Panc1 (cell line): ENCODE measurements at regions of chr17 and their contacts with region 1.

Region 1: DNA sequence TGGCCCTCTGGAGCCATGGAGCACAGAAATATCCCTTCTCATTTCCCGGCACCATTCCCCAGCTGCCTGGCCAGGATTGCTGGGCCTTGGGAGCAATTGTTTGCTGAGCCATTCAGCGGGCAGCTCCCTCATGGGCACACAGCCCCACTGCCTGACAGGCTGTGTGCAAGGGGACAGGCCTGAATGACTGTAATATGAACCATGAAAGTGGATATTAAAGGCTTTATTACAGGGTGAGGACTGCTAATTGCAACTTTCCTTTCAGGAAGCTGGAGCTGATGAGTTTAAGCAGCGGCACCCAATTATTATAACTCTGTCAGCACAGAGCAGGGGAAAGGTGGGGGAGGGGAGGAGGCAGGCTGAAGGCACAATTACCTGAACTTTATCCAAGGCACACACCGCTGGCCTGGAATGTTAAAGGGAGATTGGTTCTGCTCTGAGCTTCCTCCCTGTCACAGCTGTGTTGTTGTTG is 159.8 kb upstream of the SDK2 start:
- DNase-seq: no peak
- ATAC-seq: no peak
- H3K4me3 ChIP-seq: no peak overlapping the region
- H3K27ac ChIP-seq: no peak overlapping the region
- H3K4me1 ChIP-seq: no peaks in the 10 kb centered on the region
- H3K27me3 ChIP-seq: peaks cover 11% of the 10 kb centered on the region
- CTCF ChIP-seq: no peak

Region 2: DNA sequence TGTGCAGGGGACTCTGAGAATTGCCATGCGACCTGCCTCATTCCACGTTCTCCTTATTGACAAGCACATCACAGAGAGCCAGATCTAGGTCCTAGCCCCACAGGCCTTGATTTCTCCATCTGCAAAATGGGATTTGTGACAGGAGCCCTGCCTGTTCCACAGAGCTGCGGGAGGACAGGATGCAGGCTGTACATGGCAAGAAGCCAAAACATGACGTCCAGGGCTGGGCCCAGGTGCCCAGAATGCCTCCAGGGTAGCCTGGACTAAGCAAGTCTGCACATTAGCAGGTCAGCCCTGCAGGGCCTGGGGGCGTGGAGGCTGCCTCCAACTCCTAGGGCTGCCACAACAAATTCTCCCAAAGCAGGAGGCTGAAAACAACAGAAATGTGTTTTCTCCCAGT is 76.0 kb after region 1 on chr17:
- CTCF ChIA-PET with region 1: no interaction called
- POLR2A ChIA-PET with region 1: no interaction called
- in situ Hi-C with region 1: no loop called
- intact Hi-C with region 1: no loop called
- DNase-seq: no peak
- ATAC-seq: no peak
- H3K4me3 ChIP-seq: no peak overlapping the region
- H3K27ac ChIP-seq: no peak overlapping the region
- H3K4me1 ChIP-seq: no peaks in the 10 kb centered on the region
- H3K27me3 ChIP-seq: peaks cover 14% of the 10 kb centered on the region; the same call in 1 of the 2 replicates
- CTCF ChIP-seq: no peak

Region 3: DNA sequence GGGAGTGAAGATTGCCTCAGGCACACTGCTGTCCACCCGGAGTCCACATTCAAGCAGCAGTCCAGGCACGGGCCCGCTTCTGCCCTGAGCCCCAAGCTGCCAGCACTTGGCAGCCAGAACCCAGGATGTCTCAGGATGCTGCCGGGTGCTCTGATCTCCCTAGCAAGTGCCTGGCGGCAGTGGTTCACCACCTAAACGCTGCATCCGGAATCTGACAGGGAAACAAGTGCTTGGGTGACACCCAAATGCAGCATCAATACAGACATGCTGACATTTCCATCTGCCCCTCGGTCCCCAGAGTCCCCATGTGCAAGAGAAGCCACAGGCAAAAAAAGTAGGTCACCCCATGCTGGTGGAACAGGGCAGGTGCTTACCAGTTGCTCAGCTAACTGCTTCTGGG is 202.4 kb after region 1 on chr17:
- CTCF ChIA-PET with region 1: interaction called, 12 read pairs
- POLR2A ChIA-PET with region 1: no interaction called
- in situ Hi-C with region 1: no loop called
- intact Hi-C with region 1: no loop called
- DNase-seq: no peak
- ATAC-seq: no peak
- H3K4me3 ChIP-seq: no peak overlapping the region
- H3K27ac ChIP-seq: no peak overlapping the region
- H3K4me1 ChIP-seq: no peaks in the 10 kb centered on the region
- H3K27me3 ChIP-seq: peaks cover 25% of the 10 kb centered on the region; the same call in 1 of the 2 replicates
- CTCF ChIP-seq: no peak